Ascending aorta (tissue), 2 donors: ENCODE measurements at regions of chr2 and their contacts with region 1.

Region 1: DNA sequence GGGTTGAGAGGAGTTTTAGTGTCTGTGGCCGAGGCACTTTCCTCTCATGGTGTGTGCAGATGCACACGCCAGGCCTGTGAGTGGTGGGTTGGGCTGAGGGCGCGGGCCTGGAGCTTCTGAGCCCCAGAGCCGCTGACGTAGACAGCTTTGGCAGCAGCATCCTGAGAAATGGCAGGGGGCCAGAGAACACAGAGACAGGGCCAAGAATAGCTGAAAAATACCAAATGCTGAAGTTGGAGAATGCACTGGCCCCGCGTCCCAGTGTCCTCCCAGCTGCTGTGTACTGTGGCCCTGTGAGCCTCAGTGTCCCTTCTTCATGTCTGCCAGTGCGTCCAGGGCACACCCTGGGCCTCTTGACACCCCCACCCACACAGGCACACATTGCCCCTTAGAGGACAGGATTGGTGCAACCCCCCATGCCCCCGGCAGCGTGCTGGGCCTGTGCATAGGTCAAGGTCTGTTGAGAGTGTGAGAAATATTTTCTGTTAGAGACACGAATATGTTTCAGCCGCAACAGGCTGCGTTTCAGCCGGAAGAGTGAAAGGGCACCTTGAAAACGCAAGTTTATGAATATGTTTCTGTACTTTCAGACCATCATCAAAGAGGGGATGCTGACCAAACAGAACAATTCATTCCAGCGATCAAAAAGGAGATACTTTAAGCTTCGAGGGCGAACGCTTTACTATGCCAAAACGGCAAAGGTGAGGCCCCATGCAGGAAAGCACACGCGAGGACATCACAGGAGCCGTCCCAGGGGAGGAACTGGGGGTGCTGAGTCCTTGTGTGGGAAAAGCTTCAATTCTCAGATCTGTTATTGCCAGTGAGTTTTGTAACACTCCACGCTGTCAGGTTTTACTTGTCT is 33.6 kb downstream of the DGKD start:
- DNase-seq: peak; percentile 53 to 96
- H3K4me3 ChIP-seq: peak overlapping the region; percentile 18 to 54
- H3K27ac ChIP-seq: peak overlapping the region; percentile 78 to 84
- H3K4me1 ChIP-seq: peaks cover 11 to 25% of the 10 kb centered on the region in 2 donors
- H3K27me3 ChIP-seq: no peaks in the 10 kb centered on the region
- CTCF ChIP-seq: no peak

Region 2: DNA sequence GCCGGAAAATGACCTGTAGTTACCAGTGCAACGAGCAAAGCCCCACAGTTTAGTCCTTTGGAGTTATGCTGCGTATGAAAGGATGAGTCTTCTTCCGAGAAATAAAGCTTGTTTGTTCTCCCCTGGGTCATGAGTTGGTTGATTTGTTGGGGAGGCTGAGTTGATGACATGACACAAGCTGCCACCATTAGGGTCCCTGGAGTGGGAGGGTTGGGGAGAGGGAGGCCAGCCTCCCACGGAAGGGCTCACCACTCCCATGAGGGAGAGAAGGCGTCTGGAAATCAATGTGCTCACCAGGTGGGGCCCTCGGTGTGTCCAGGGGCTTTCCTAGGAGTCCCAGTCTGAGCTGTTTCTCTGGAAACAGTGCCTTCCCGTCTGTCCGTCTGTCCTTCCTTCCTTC is 41.0 kb before region 1 on chr2:
- intact Hi-C with region 1: no loop called
- DNase-seq: peak in 1 of 2 donors; percentile 34
- H3K4me3 ChIP-seq: no peak overlapping the region
- H3K27ac ChIP-seq: no peak overlapping the region
- H3K4me1 ChIP-seq: no peaks in the 10 kb centered on the region
- H3K27me3 ChIP-seq: no peaks in the 10 kb centered on the region
- CTCF ChIP-seq: no peak

Region 3: GRCh38 chr2:233404222-233404621 is 16.3 kb after region 1 on chr2:
- intact Hi-C with region 1: loop called (anchors 2 kb)
- DNase-seq: peak in 1 of 2 donors; percentile 63
- H3K4me3 ChIP-seq: no peak overlapping the region
- H3K27ac ChIP-seq: no peak overlapping the region
- H3K4me1 ChIP-seq: peaks cover 8 to 12% of the 10 kb centered on the region in 2 donors
- H3K27me3 ChIP-seq: no peaks in the 10 kb centered on the region
- CTCF ChIP-seq: peak in 2 of 3 experiments; percentile 63 to 68